Activated CD4-positive, alpha-beta T cell treated with anti-CD3 and anti-CD28 coated beads for 36 hours (primary cell): ENCODE measurements at regions of chr20 and their contacts with region 1.

Region 1: GRCh38 chr20:35092524-35093266 is at the start of gene TRPC4AP:
- DNase-seq: peak; percentile 95
- ATAC-seq: peak; percentile 88
- H3K4me3 Mint-ChIP-seq: peak within 1 kb of the TSS; percentile 90
- H3K27ac Mint-ChIP-seq: peak within 1 kb of the TSS; percentile 100
- H3K4me1 Mint-ChIP-seq: peaks cover 52% of the 10 kb centered on the region
- H3K27me3 Mint-ChIP-seq: no peaks in the 10 kb centered on the region
- total RNA-seq, gene TRPC4AP: 36.0 to 39.6 TPM

Region 2: DNA sequence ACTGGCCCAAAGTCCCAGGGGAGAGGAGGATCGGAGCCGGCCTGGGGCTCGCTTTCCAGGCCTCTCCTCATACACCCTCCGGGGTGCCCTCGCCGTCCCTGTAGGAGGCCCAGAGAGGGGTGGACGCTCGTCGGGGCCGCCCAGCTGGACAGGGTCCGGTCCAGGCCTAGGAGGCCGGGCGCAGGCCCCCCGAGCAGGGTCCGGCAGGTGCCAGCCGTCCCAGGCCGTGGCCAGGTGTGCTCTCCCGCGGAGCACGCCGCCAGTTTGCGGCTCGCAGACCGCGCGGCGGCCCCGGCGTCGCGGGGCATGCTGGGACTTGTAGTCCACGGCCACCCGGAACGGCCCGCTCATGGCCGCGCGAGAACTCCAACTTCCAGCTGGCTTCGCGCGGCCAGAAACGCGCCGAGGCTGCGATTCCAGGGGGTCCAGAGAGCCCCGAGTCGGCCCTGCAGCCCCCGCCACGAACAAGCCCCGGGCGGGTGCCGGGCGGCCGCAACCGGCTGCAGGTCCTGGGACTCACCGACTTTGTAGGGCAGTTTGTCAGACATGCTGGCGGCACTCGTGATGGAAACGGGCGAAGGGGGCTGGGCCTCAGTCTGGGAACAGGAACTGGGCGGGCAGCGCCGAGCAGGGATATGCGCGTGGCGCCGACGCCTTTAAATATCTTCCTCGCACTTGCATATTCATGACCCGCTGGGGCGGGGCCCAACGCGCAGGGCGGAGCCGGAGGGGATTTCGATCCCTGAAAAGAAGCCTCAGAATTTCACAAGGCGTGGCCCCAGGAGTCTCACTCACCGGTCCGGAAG is 789.8 kb before region 1 on chr20 and contains the start of gene AHCY:
- CTCF ChIA-PET with region 1: no interaction called
- POLR2A ChIA-PET with region 1: no interaction called
- intact Hi-C with region 1: loop called in 1 of 2 experiments (anchors 1 kb)
- DNase-seq: peak; percentile 97
- ATAC-seq: peak; percentile 96
- H3K4me3 Mint-ChIP-seq: peak within 1 kb of the TSS; percentile 90
- H3K27ac Mint-ChIP-seq: peak within 1 kb of the TSS; percentile 91
- H3K4me1 Mint-ChIP-seq: peaks cover 18% of the 10 kb centered on the region
- H3K27me3 Mint-ChIP-seq: no peaks in the 10 kb centered on the region
- total RNA-seq, gene AHCY: 183 to 189 TPM

Region 3: DNA sequence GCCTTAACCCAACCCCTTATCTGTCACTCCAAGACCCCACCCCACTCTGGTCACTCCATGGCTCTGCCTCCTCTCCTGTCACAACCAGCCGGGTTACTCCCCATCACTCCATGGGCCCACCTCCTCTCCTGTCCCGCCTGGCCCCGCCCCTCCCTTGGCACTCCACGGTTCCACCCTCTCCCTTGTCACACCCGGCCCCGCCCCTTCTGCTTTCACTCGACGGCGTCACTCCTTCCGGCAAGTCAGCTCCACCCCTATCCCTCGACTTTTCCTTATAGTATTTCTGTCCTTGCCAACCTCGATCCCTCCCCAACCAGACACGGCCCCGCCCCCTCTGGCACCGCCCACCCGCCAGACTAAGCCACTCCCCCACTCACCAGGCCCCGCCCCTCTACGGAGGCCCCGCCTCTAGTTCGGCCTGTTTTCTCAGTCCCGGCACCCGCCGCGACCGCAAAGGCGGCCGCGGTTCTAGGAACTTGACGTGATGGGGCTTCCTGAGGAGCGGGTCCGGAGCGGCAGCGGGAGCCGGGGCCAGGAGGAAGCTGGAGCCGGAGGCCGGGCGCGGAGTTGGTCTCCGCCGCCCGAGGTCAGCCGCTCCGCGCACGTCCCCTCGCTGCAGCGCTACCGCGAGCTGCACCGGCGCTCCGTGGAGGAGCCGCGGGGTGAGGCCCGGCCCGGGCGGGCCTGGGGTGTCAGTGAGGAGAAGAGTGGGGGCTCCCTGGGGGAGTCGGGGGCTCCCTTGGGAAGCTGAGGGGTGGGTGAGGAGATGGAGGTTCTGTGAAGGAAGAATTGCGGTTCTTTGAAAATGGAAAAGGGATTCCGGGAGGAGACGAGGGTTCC is 216.3 kb before region 1 on chr20 and contains the start of gene ACSS2:
- CTCF ChIA-PET with region 1: interaction called, 3 read pairs
- POLR2A ChIA-PET with region 1: no interaction called
- intact Hi-C with region 1: loop called (anchors 1 to 2 kb)
- DNase-seq: peak; percentile 99
- ATAC-seq: peak; percentile 86
- H3K4me3 Mint-ChIP-seq: peak within 1 kb of the TSS; percentile 90
- H3K27ac Mint-ChIP-seq: peak within 1 kb of the TSS; percentile 85
- H3K4me1 Mint-ChIP-seq: peaks cover 54% of the 10 kb centered on the region
- H3K27me3 Mint-ChIP-seq: no peaks in the 10 kb centered on the region
- total RNA-seq, gene ACSS2: 29.9 to 35.1 TPM

Region 4: DNA sequence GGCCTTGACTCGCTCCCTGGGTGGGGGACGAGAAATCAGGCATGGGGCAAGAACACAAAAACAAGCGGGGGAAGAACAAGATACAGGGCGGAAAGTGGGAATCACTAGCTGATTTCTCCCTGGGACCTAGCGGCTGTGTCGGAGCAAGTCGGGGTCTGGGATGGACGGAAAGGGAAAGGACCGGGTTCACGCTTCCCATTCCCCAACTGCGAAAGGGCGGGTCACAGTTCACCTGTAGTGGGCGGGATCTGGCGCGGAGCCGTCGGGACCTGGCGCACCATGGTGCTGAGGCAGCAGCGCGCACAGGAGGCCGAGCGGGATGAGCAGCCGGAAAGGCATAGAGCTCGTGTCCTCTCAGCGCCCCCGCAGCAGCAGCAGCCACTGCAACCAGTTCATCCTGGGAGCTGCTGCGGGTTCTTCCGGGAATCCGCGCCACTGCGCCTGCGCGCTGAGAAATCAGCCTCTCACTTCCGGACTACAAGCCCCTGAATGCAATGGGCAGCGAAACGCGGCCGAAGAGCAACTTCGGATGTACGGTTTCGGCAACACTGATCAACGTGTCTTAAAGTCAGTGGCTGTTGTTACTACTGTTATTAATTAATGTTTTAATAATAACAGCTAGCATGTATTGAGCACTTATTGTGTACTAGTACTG is 54.4 kb after region 1 on chr20 and contains the start of gene EDEM2:
- CTCF ChIA-PET with region 1: interaction called, 17 read pairs
- POLR2A ChIA-PET with region 1: interaction called, 4 read pairs
- intact Hi-C with region 1: loop called (anchors 1 to 2 kb)
- DNase-seq: peak; percentile 97
- ATAC-seq: peak; percentile 92
- H3K4me3 Mint-ChIP-seq: peak within 1 kb of the TSS; percentile 97
- H3K27ac Mint-ChIP-seq: peak within 1 kb of the TSS; percentile 95
- H3K4me1 Mint-ChIP-seq: peaks cover 29% of the 10 kb centered on the region
- H3K27me3 Mint-ChIP-seq: no peaks in the 10 kb centered on the region
- total RNA-seq, gene EDEM2: 16.5 to 18.2 TPM

Region 5: DNA sequence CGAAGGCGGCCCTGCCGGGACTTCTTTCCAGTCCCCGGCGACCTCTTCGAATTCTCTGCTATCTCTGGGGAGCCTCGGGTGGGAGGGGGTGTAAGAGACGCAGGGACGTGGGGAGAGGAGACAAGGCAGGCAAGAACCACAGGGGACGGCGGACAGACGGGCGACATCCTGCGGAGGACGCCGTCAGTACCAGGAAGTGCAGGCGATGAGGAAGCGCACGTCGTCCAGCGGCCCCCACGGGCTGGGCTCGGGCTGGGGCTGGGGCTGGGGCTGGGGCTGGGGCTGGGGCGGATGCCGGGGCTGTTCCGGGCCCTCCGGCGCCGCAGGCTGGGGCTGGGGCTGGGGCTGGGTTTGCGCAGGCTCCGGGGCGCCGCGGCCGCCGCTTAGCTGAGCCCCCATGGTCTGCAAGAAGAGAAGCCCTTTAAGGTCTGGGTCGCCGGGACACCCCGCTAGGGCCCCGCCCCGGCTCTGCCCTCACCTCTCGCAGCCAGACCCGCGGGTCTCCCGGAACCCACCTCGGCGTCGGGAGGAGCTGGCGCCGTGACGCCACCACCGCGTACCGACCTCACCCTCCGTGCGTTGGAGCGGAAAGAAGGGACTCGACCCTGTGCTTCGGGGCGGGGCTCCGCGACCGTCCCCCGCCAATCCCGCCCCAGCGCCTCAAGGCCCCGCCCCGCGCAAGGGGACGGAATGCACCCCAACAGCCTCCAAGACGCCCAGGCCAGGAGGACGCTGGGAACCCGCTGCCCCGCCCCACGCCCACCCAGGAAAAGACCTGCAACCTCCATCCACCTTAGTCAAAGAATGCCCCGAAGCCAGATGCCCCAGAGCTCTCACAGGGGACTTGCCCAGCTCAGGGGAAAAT is 185.1 kb after region 1 on chr20 and contains the start of gene MMP24OS:
- CTCF ChIA-PET with region 1: interaction called, 6 read pairs
- POLR2A ChIA-PET with region 1: no interaction called
- intact Hi-C with region 1: loop called in 1 of 2 experiments (anchors 1 kb)
- DNase-seq: peak; percentile 94
- ATAC-seq: peak; percentile 96
- H3K4me3 Mint-ChIP-seq: peak within 1 kb of the TSS; percentile 99
- H3K27ac Mint-ChIP-seq: peak within 1 kb of the TSS; percentile 97
- H3K4me1 Mint-ChIP-seq: peaks cover 9% of the 10 kb centered on the region
- H3K27me3 Mint-ChIP-seq: no peaks in the 10 kb centered on the region
- total RNA-seq, gene MMP24OS: 44.6 to 56.8 TPM

Region 6: GRCh38 chr20:35410613-35411012 is 317.9 kb after region 1 on chr20:
- CTCF ChIA-PET with region 1: no interaction called
- POLR2A ChIA-PET with region 1: no interaction called
- intact Hi-C with region 1: loop called in 1 of 2 experiments (anchors 1 kb)
- DNase-seq: no peak
- ATAC-seq: no peak
- H3K4me3 Mint-ChIP-seq: peak overlapping the region; percentile 91
- H3K27ac Mint-ChIP-seq: peak overlapping the region; percentile 100
- H3K4me1 Mint-ChIP-seq: peaks cover 21% of the 10 kb centered on the region
- H3K27me3 Mint-ChIP-seq: no peaks in the 10 kb centered on the region

Region 7: DNA sequence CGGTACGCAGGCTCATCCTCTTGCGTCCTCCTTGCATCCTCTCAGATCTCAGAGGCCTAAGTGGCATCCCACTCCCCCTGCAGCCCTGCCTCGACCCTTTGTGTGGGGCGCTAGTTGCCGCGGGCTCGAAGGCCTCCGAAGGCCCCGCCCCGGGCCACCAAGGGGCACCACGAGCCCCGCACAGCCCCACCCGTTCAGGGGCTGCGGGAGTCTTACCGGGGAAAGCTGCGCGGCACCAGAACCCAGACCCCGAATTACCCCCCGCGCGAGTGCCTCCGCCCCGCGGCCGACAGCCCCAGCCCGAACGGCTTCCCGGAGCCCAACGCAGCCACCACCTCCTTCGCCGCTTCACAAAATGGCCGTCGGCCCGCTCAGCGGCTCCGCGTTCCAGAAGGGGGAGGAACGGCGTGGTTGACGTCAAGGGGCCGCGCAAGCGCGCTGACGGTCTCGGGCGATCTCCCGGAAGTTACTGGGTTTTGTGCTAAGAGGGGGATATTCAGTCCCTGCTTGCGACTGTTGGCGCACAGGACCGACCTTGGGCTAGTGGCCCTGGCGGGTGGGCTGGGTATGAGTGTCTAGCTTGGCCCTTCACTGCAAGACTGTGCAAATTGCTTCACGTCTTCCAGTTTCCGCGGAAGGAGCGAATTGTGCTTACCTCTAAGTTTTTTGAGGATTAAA is 572.0 kb after region 1 on chr20 and contains the starts of genes CPNE1 and RBM12:
- CTCF ChIA-PET with region 1: no interaction called
- POLR2A ChIA-PET with region 1: no interaction called
- intact Hi-C with region 1: loop called in 1 of 2 experiments (anchors 2 kb)
- DNase-seq: peak; percentile 96
- ATAC-seq: peak; percentile 68
- H3K4me3 Mint-ChIP-seq: peak within 1 kb of the TSS; percentile 80
- H3K27ac Mint-ChIP-seq: peak within 1 kb of the TSS; percentile 100
- H3K4me1 Mint-ChIP-seq: peaks cover 36% of the 10 kb centered on the region
- H3K27me3 Mint-ChIP-seq: no peaks in the 10 kb centered on the region
- total RNA-seq, gene CPNE1: 249 to 258 TPM
- total RNA-seq, gene RBM12: 122 to 148 TPM